Activated T-helper 1 cell treated with anti-CD3 and anti-CD28 coated beads, Interleukin-12 subunit alpha, Interleukin-12 subunit beta, Interleukin-2, Interleukin-4 antibody, amounts not matched to agents 30 ng/mL and 10 ng/mL and 1 ng/mL, durations not matched to agents 14 hours and 24 hours and 36 hours (primary cell): ENCODE measurements at regions of chr11 and their contacts with region 1.

Region 1: GRCh38 chr11:119205574-119206510 is at the start of gene CBL:
- DNase-seq: peak; percentile 89
- H3K4me3 Mint-ChIP-seq: peak within 1 kb of the TSS; percentile 98
- H3K27ac Mint-ChIP-seq: peak within 1 kb of the TSS; percentile 97
- H3K4me1 Mint-ChIP-seq: peaks cover 28% of the 10 kb centered on the region
- H3K27me3 Mint-ChIP-seq: no peaks in the 10 kb centered on the region
- total RNA-seq, gene CBL: 38.1 and 39.9 TPM in 2 replicates

Region 2: DNA sequence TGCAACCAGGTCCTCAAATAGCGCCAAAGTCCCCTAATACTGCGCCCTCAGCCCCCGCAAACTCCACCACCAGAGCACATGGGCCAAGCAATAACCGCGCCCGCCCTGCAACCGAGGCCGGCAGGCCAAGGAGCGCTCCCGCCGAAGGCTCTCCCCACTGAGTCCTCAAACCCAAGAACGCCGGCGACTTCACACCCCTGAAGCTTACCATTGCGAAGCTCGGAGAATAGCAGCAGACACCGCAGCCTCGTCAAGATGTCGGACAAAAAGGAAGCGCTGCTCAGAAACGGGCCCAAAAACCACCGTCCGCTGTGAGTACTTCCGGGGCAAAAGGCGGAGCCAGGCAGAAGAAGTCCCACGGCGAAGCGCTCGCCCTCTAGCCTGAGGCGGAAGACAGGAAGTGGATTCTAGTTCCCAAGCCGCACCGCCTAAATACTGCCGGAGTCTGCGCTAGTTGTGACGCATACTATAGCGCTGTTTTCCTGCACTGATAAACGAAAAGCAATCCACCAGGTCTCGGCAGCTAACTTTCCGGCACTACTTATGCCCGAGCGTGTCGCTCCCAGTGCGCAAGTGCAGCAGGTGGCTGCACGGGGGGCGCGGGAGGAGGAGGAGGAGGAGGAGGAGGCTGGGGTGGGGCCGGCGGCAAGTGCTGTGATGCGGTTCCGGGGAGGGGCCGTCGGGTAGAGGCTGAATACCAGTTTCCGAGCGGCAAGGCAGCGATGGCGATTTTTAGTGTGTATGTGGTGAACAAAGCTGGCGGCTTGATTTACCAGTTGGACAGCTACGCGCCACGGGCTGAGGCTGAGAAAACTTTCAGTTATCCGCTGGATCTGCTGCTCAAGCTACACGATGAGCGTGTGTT is 187.5 kb before region 1 on chr11 and contains the starts of genes RPS25 and TRAPPC4:
- intact Hi-C with region 1: loop called (anchors 5 kb)
- DNase-seq: peak; percentile 92
- H3K4me3 Mint-ChIP-seq: peak within 1 kb of the TSS; percentile 99
- H3K27ac Mint-ChIP-seq: peak within 1 kb of the TSS; percentile 100
- H3K4me1 Mint-ChIP-seq: peaks cover 42% of the 10 kb centered on the region
- H3K27me3 Mint-ChIP-seq: no peaks in the 10 kb centered on the region
- total RNA-seq, gene RPS25: 1,440 and 1,455 TPM in 2 replicates
- total RNA-seq, gene TRAPPC4: 141 and 142 TPM in 2 replicates

Region 3: GRCh38 chr11:119222308-119222707 is 16.5 kb after region 1 on chr11:
- intact Hi-C with region 1: loop called (anchors 2 kb)
- DNase-seq: no peak
- H3K4me3 Mint-ChIP-seq: no peak overlapping the region
- H3K27ac Mint-ChIP-seq: no peak overlapping the region
- H3K4me1 Mint-ChIP-seq: peaks cover 36% of the 10 kb centered on the region
- H3K27me3 Mint-ChIP-seq: no peaks in the 10 kb centered on the region

Region 4: DNA sequence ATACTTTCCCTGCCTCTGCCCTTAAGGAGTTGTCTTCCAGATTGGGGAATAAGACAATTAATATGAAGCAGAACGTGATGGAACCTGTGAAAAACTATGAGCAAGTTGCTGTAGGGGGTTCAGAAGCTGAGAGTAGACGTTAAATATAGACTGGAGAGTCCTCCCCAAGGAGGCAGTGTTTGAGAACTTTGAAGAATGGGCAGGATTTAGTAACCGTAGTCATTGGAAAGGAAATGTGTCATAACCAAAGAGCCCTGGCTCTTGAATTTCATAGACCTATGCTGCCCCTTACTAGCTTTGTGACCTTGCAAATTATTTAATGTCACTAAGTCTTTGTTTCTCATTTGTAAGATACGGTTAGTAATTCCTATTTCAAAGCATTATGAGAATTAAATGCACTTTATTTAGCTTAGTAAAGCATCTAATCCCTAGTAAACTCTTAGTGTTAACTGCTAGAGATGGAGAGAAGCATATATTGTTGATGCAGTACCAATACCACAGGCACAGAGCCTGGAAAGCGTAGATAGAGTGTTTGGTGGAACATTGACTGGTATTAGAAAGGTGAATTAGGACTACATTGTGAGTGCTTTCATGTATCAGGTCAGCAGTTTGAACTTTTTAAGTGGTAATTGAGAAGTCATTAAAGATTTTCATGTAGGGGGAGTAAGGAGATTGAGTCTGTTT is 57.0 kb after region 1 on chr11:
- intact Hi-C with region 1: loop called (anchors 1 kb)
- DNase-seq: no peak
- H3K4me3 Mint-ChIP-seq: no peak overlapping the region
- H3K27ac Mint-ChIP-seq: no peak overlapping the region
- H3K4me1 Mint-ChIP-seq: peaks cover 46% of the 10 kb centered on the region
- H3K27me3 Mint-ChIP-seq: no peaks in the 10 kb centered on the region

Region 5: DNA sequence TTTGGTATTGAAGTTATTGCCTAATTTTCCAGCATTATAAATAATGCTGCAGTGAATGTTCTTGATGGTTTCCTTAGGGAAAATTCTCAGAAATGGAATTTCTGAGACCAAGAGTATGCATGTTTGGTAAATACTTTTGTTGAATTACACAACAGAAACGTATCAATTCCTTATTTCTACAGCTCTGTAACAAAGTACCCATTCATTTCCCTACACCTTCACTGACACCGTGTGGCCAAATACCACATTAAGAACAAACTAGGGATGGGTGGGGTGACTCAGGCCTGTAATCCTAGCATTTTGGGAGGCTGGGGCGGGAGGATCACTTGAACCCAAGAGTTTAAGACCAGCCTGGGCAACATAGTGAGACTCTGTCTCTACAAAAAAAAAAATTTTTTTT is 89.3 kb after region 1 on chr11:
- intact Hi-C with region 1: no loop called
- DNase-seq: no peak
- H3K4me3 Mint-ChIP-seq: no peak overlapping the region
- H3K27ac Mint-ChIP-seq: no peak overlapping the region
- H3K4me1 Mint-ChIP-seq: no peaks in the 10 kb centered on the region
- H3K27me3 Mint-ChIP-seq: no peaks in the 10 kb centered on the region

Region 6: GRCh38 chr11:119334174-119334930 is 128.5 kb after region 1 on chr11 and contains the start of gene RNF26:
- intact Hi-C with region 1: loop called (anchors 1 kb)
- DNase-seq: peak; percentile 93
- H3K4me3 Mint-ChIP-seq: peak within 1 kb of the TSS; percentile 97
- H3K27ac Mint-ChIP-seq: peak within 1 kb of the TSS; percentile 96
- H3K4me1 Mint-ChIP-seq: peaks cover 53% of the 10 kb centered on the region
- H3K27me3 Mint-ChIP-seq: peaks cover 25% of the 10 kb centered on the region
- total RNA-seq, gene RNF26: 26.1 and 27.9 TPM in 2 replicates

Region 7: GRCh38 chr11:119584193-119585037 is 378.6 kb after region 1 on chr11:
- intact Hi-C with region 1: no loop called
- DNase-seq: no peak
- H3K4me3 Mint-ChIP-seq: no peak overlapping the region
- H3K27ac Mint-ChIP-seq: no peak overlapping the region
- H3K4me1 Mint-ChIP-seq: no peaks in the 10 kb centered on the region
- H3K27me3 Mint-ChIP-seq: peaks cover 36% of the 10 kb centered on the region